CD4-positive, alpha-beta memory T cell (primary cell): ENCODE measurements at regions of chr4 and their contacts with region 1.

Region 1: GRCh38 chr4:184250795-184251669 is 33.4 kb upstream of the ENPP6 start:
- DNase-seq: peak in 4 of 5 donors; percentile 59 to 65 (median 61)
- H3K4me3 ChIP-seq: no peak overlapping the region
- H3K4me3 Mint-ChIP-seq: no peak overlapping the region
- H3K27ac ChIP-seq: no peak overlapping the region
- H3K27ac Mint-ChIP-seq: peak overlapping the region in 3 of 7 donors; percentile 2 to 26 (median 15)
- H3K4me1 ChIP-seq: no peaks in the 10 kb centered on the region
- H3K4me1 Mint-ChIP-seq: peaks cover 0 to 6% (median 3%) of the 10 kb centered on the region in 4 donors
- H3K27me3 ChIP-seq: no peaks in the 10 kb centered on the region
- H3K27me3 Mint-ChIP-seq: peaks cover 0 to 2% of the 10 kb centered on the region in 2 donors

Region 2: DNA sequence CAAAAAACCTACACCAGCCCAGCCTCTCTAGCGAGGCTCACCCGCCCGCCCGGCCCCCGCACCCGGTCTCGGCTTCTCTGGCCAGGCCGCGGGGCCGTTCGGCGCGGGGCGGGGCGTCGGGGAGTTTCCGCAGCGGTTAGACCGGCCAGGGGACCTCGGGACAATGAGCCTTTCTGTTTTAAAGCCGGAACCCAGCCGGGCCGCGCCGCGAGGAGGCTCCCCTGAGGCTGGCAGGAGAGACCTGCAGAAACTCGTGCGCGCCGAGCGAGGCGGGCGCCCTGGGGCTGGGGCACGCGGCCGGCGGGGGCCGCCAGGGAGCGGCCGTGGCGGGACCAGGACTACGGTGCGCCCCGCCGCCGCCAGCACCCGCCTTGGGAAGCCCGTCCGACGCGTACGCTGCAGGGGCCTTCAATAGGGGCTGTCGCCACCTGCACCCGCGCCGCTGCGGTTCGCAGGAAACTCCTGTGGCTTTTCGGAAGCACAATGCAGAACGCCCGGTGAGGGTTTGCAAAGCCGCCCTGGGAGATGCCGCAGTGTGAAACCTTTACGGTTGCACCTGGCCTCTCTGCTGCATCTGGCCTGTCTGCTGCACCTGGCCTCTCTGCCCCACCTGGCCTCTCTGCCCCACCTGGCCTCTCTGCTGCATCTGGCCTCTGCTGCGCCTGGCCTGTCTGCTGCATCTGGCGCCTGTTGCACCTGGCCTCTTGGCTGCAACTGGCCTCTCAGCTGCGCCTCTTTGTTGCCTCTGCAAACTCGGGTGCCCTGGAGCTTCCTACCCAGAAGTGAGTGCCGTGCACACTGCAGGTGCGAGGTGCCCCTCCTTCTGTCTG is 528.1 kb before region 1 on chr4:
- CTCF ChIA-PET with region 1: no interaction called
- POLR2A ChIA-PET with region 1: no interaction called
- intact Hi-C with region 1: loop called (anchors 2 kb)
- DNase-seq: peak; percentile 42 to 62 (median 51)
- H3K4me3 ChIP-seq: peak overlapping the region in 1 of 2 donors; percentile 64
- H3K4me3 Mint-ChIP-seq: peak overlapping the region; percentile 85 to 94 (median 90)
- H3K27ac ChIP-seq: no peak overlapping the region
- H3K27ac Mint-ChIP-seq: peak overlapping the region; percentile 19 to 88 (median 64)
- H3K4me1 ChIP-seq: peaks cover 9% of the 10 kb centered on the region
- H3K4me1 Mint-ChIP-seq: peaks cover 10 to 16% (median 15%) of the 10 kb centered on the region in 4 donors
- H3K27me3 ChIP-seq: no peaks in the 10 kb centered on the region
- H3K27me3 Mint-ChIP-seq: peaks cover 0 to 5% of the 10 kb centered on the region in 2 donors

Region 3: GRCh38 chr4:184168406-184169019 is 82.5 kb before region 1 on chr4:
- CTCF ChIA-PET with region 1: interaction called, 3 read pairs
- POLR2A ChIA-PET with region 1: no interaction called
- intact Hi-C with region 1: loop called (anchors 5 kb)
- DNase-seq: peak in 4 of 5 donors; percentile 11 to 38 (median 20)
- H3K4me3 ChIP-seq: no peak overlapping the region
- H3K4me3 Mint-ChIP-seq: no peak overlapping the region
- H3K27ac ChIP-seq: no peak overlapping the region
- H3K27ac Mint-ChIP-seq: no peak overlapping the region
- H3K4me1 ChIP-seq: no peaks in the 10 kb centered on the region
- H3K4me1 Mint-ChIP-seq: peaks cover 0 to 8% (median under 1%) of the 10 kb centered on the region in 4 donors
- H3K27me3 ChIP-seq: no peaks in the 10 kb centered on the region
- H3K27me3 Mint-ChIP-seq: peaks cover 41 to 49% of the 10 kb centered on the region in 2 donors

Region 4: DNA sequence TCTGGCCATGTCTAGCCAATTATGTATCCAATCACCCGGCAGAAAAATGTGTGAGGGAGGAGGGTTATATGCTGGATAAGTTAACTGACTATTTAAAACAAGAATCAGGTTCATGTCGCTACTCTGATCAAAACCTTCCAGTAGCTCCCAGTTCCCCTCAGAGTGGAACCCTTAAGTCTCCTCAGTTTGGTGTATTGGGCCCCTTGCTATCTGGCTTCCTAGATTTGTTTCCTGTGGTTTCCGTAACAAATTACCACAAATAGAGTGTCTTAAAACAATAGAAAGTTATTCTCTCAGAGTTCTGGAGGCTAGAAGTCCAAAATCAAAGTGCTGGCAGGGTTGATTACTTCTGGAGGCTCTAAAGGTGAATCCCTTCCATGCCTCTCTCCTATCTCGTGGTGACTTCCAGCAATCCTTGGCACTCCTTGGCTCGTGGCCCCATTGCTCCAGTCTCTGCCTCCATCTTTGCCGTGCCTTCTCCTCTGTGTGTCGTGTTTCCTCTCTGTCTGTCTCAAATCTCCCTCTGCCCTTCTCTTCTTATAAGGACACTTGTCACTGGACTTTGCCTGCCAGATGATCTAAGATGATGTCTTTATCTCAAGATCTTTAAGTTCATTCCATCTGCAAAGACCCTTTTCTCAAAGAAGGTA is 22.9 kb before region 1 on chr4:
- CTCF ChIA-PET with region 1: interaction called, 13 read pairs
- POLR2A ChIA-PET with region 1: no interaction called
- intact Hi-C with region 1: no loop called
- DNase-seq: no peak
- H3K4me3 ChIP-seq: no peak overlapping the region
- H3K4me3 Mint-ChIP-seq: no peak overlapping the region
- H3K27ac ChIP-seq: no peak overlapping the region
- H3K27ac Mint-ChIP-seq: peak overlapping the region in 2 of 7 donors; percentile 5
- H3K4me1 ChIP-seq: peaks cover 19% of the 10 kb centered on the region
- H3K4me1 Mint-ChIP-seq: peaks cover 17 to 29% (median 22%) of the 10 kb centered on the region in 4 donors
- H3K27me3 ChIP-seq: no peaks in the 10 kb centered on the region
- H3K27me3 Mint-ChIP-seq: peaks cover 2 to 3% of the 10 kb centered on the region in 2 donors